Psoas muscle (tissue), 8 donors: ENCODE measurements at regions of chr6 and their contacts with region 1.

Region 1: DNA sequence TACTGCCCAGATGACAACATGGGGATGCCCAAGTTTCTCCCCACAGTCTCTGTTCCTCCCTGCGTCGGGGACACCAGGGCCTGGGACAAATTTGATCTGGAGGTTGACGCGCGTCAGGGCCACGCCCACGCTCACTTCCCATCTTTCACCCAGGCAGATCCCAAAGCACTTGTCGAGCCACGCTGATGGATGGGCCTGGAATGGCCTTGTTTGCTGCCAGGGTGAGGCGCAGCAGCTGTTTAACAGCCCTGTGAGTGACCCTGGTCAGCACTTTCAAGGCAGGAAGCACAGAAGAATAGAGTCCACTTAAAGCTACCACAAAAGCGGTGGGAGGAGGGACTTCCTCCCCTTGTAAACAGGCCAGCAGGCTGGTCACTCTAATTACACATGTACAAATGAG is 324.7 kb upstream of the JARID2 start:
- DNase-seq: peak; percentile 83 to 85
- ATAC-seq: peak; percentile 30 to 90 (median 48)
- H3K4me3 ChIP-seq: no peak overlapping the region
- H3K27ac ChIP-seq: peak overlapping the region; percentile 26
- H3K4me1 ChIP-seq: peaks cover 55% of the 10 kb centered on the region
- H3K27me3 ChIP-seq: no peaks in the 10 kb centered on the region
- CTCF ChIP-seq: no peak

Region 2: DNA sequence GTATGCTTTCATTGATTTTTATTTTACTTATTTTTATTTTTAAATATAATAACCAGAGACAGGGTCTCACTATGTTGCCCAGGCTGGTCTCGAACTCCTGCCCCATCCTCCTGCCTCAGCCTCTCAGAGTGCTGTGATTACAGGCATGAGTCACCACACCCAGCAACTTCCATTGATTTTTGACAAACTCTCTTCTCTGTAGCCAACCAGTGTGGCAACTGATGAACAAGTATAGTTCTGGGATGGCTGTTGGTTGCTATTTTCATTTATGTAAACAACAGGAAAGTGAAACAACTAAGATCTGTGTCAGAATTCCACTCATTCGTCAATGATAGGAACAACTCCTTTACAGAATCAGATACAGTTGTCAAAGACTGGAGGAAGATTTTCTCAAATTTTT is 32.0 kb before region 1 on chr6:
- intact Hi-C with region 1: loop called (anchors 5 kb)
- DNase-seq: no peak
- ATAC-seq: peak in 2 of 4 donors; percentile 27 to 45
- H3K4me3 ChIP-seq: no peak overlapping the region
- H3K27ac ChIP-seq: peak overlapping the region; percentile 72
- H3K4me1 ChIP-seq: peaks cover 22% of the 10 kb centered on the region
- H3K27me3 ChIP-seq: no peaks in the 10 kb centered on the region
- CTCF ChIP-seq: no peak

Region 3: GRCh38 chr6:14900919-14901318 is 20.3 kb before region 1 on chr6:
- intact Hi-C with region 1: no loop called
- DNase-seq: no peak
- ATAC-seq: no peak
- H3K4me3 ChIP-seq: no peak overlapping the region
- H3K27ac ChIP-seq: no peak overlapping the region
- H3K4me1 ChIP-seq: no peaks in the 10 kb centered on the region
- H3K27me3 ChIP-seq: no peaks in the 10 kb centered on the region
- CTCF ChIP-seq: no peak

Region 4: DNA sequence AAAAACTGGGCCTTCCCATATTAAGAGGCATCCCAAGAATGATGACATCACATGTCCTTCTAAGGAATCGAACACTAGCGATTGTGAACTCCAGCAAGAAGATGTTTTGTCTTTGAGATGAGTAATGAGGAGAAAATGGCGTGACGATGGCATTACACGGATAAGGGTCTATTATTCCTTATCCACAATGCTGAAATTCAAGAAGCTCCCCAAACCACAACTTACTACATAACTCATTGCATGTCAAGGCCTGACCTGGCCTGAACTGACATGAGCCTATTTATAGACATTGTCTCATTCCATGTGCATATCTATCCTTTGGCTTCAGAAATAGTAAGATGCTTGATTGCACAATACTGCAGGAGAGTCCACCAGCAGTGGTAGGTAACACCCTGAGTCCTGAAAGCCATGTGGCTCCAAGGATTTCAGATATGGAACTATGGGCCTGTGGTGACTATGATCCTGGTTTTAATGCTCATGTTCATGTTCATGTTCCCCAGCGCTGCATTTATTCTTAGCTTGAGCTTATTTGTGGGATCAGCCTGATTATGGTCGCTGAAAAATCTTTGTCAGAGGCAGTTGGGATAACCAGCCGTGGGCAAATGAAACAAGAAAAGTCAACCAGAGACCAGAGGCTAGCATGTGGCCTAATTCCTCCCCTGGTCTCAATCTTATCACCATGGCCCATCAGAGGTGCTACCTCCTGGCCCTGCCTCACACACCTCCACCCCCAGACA is 141.5 kb after region 1 on chr6:
- intact Hi-C with region 1: loop called in 1 of 2 experiments (anchors 10 kb)
- DNase-seq: no peak
- ATAC-seq: peak; percentile 87 to 95 (median 89)
- H3K4me3 ChIP-seq: no peak overlapping the region
- H3K27ac ChIP-seq: peak overlapping the region; percentile 86
- H3K4me1 ChIP-seq: peaks cover 12% of the 10 kb centered on the region
- H3K27me3 ChIP-seq: no peaks in the 10 kb centered on the region
- CTCF ChIP-seq: no peak